IMR-90 (cell line): ENCODE measurements at regions of chr15 and their contacts with region 1.

Region 1: DNA sequence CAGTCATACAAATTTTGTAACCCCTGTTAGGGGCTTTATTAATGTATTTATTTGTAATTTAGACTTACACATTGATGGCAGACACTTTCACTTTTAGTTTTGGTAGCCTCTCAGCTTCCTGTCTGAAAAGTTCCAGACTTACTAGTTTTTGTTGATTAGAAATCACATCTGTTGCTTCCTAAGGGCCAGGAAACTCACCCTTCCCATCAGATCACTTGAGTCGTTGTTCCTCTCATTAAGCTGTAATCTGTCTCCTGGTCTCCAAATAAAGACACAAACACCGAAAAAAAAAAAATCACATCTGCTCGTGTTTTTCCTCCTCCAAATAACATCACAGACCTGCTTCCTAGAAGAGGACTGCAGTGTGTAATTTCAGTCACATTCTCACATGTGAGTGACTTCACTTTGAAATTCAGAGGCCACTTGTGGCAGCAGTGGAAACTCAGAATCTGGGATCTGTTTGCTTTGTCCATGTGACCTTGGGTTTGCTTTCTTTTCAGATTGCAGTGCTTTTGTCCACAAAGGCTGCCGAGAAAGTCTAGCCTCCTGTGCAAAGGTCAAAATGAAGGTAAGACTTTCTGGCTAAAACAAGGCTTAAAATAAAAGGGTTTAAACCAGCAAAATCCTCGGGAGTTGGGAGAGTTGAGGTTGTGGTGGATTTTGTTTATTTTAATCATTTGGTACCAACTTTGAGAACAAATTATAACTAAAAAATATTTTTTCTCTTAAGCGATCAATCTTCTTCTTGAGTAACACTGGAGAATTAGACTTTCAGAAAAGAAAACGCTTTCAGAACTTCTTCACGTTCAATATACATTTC is 87.0 kb downstream of the KLHL25 start:
- DNase-seq: peak; percentile 51
- ATAC-seq: peak; percentile 43
- H3K4me3 ChIP-seq: peak overlapping the region; percentile 9; the same call in 1 of the 2 replicates
- H3K27ac ChIP-seq: peak overlapping the region; percentile 27; the same call in 1 of the 2 replicates
- H3K4me1 ChIP-seq: peaks cover 14% of the 10 kb centered on the region
- H3K27me3 ChIP-seq: no peaks in the 10 kb centered on the region
- CTCF ChIP-seq: no peak
- POLR2A ChIP-seq: no peak
- RAD21 ChIP-seq: no peak

Region 2: GRCh38 chr15:85318048-85318731 is 389.5 kb before region 1 on chr15:
- CTCF ChIA-PET with region 1: no interaction called
- POLR2A ChIA-PET with region 1: no interaction called
- dilution Hi-C with region 1: no loop called
- in situ Hi-C with region 1: no loop called
- intact Hi-C with region 1: loop called (anchors 5 kb)
- DNase-seq: peak; percentile 98
- ATAC-seq: peak; percentile 88
- H3K4me3 ChIP-seq: no peak overlapping the region
- H3K27ac ChIP-seq: no peak overlapping the region; the same call in 1 of the 2 replicates
- H3K4me1 ChIP-seq: peaks cover 14% of the 10 kb centered on the region
- H3K27me3 ChIP-seq: no peaks in the 10 kb centered on the region
- CTCF ChIP-seq: peak; percentile 28
- POLR2A ChIP-seq: no peak
- RAD21 ChIP-seq: no peak

Region 3: GRCh38 chr15:85618956-85619491 is 88.7 kb before region 1 on chr15:
- CTCF ChIA-PET with region 1: no interaction called
- POLR2A ChIA-PET with region 1: no interaction called
- dilution Hi-C with region 1: no loop called
- in situ Hi-C with region 1: no loop called
- intact Hi-C with region 1: loop called (anchors 1 kb)
- DNase-seq: peak; percentile 98
- ATAC-seq: peak; percentile 86
- H3K4me3 ChIP-seq: peak overlapping the region; percentile 61
- H3K27ac ChIP-seq: peak overlapping the region; percentile 52
- H3K4me1 ChIP-seq: peaks cover 21% of the 10 kb centered on the region
- H3K27me3 ChIP-seq: no peaks in the 10 kb centered on the region
- CTCF ChIP-seq: no peak
- POLR2A ChIP-seq: peak; percentile 51; the same call in 1 of the 2 replicates
- RAD21 ChIP-seq: no peak; the same call in 1 of the 2 replicates

Region 4: DNA sequence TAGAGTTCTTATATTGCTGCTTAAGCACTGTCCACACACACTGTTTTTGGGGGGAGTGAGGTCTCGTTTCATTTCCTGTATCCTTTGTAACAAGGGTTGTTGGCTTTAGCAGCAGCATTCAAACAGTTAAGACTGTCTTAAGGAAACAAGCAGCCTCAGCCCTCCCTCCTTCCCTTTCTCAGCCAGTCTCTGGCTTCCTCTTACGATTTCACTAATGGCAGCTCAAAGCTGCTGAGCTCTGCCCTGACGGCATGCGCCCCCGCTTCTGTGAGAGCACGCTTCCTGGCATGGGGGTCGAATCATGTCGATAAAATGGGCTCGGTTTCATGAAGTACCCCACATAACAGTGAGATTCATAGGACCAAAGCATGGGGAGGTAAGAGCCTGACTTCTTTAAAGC is 18.0 kb before region 1 on chr15:
- CTCF ChIA-PET with region 1: no interaction called
- POLR2A ChIA-PET with region 1: no interaction called
- dilution Hi-C with region 1: no loop called
- in situ Hi-C with region 1: no loop called
- intact Hi-C with region 1: no loop called
- DNase-seq: peak; percentile 72
- ATAC-seq: peak; percentile 94
- H3K4me3 ChIP-seq: peak overlapping the region; percentile 33
- H3K27ac ChIP-seq: peak overlapping the region; percentile 79
- H3K4me1 ChIP-seq: peaks cover 2% of the 10 kb centered on the region; the same call in 1 of the 2 replicates
- H3K27me3 ChIP-seq: no peaks in the 10 kb centered on the region
- CTCF ChIP-seq: no peak
- POLR2A ChIP-seq: no peak
- RAD21 ChIP-seq: no peak